ENCODE measurements at regions of chr1 and their contacts with region 1.

Region 1: DNA sequence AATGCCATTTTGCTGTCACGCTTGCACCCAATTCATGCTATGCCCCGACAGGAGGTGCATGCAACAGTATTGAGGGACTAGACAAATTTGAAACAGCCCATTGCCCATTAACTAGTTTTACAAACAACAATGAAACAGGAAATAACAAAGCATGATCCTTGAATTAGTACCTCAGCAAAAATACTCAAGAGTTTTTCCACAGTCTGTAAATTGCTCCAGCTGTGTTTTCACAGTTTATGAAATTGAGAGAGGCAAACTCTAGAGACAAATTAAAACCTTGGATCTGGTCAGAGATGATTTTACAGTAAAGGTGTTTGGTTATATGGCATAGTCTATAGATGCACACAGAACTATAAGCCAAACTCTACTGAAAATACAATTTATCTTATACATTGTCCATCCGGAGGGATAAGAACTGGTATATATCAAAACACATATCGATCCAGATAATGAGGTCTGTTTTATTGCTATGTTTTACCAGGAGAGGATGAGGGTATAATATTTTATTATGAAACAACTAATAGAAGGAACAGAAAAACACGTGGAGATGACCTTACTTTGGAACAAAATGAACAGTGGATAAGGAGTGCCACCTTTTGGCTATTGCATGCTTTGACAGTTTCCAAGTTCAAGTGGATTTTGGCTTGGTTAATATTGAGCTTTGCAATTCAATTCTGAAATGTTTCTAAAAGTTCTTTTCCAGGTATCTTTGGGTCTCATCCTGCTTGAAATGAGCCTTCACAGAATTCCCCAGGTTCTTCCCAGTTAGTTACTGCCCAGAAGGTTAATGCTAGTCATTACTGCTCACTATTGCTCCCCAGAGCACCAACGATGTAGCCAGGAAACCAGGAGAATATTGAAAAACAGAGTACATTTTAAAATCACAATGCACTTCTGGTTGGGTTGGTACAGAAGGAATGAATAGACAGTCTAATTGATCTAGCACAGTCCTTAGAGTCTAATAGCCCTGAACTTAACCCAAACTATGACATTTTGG is 45.7 kb downstream of the ZC3H11B start:
- DNase-seq: peak; percentile 87
- ATAC-seq: peak; percentile 69
- H3K4me3 ChIP-seq: no peak overlapping the region
- H3K27ac ChIP-seq: peak overlapping the region; percentile 34
- H3K4me1 ChIP-seq: peaks cover 29% of the 10 kb centered on the region
- H3K27me3 ChIP-seq: no peaks in the 10 kb centered on the region
- CTCF ChIP-seq: peak; percentile 99

Region 2: DNA sequence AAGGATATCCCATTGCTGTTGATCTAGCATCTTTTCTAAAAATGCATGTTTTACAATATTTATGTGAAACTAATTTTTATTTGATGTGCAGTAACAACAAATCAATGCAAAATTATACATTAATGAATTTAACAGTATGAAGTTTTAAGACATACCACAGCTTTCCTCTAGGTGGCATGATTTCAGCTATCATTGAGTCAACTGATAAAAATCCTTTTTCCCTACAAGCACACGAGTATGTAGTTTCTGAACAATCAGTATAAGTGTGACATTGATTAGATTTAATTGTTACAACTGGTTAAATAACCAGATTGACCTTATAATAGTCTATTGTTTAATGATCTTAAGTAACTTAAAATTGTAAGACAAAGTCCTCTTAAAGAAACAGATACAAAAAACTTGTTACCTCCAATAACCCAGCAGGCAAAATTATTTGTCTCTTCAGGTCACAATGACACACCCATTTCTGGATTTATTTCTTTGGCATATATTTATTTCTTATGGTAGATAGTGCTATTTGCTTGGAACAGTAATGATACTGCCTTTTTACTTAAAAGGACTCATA is 1227.9 kb before region 1 on chr1:
- CTCF ChIA-PET with region 1: interaction called, 3 read pairs
- POLR2A ChIA-PET with region 1: no interaction called
- intact Hi-C with region 1: loop called (anchors 2 kb)
- DNase-seq: peak; percentile 88
- ATAC-seq: peak; percentile 63
- H3K4me3 ChIP-seq: no peak overlapping the region
- H3K27ac ChIP-seq: peak overlapping the region; percentile 6
- H3K4me1 ChIP-seq: peaks cover 18% of the 10 kb centered on the region
- H3K27me3 ChIP-seq: no peaks in the 10 kb centered on the region
- CTCF ChIP-seq: peak; percentile 98

Region 3: DNA sequence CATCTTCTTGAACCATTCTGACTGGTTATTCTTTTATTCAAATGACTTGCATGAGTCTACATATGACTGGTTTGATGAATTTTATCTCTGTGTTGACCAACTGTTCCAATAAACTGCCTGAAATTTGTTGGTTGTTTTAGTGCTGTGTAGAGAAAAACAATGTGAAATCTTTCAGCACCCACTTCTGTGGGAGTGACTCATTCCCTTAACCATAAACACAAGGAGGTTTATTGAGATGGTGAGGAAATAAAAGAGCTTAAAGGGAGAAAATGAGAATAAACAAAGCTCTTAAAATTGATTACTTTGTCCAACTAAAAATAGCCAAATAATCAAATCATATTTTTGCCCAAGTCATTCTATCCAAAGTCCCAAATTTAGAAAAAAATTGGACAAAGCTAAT is 881.0 kb before region 1 on chr1:
- CTCF ChIA-PET with region 1: interaction called, 3 read pairs
- POLR2A ChIA-PET with region 1: no interaction called
- intact Hi-C with region 1: loop called (anchors 1 kb)
- DNase-seq: peak; percentile 82
- ATAC-seq: peak; percentile 84
- H3K4me3 ChIP-seq: no peak overlapping the region
- H3K27ac ChIP-seq: no peak overlapping the region
- H3K4me1 ChIP-seq: peaks cover 7% of the 10 kb centered on the region; the same call in 1 of the 2 replicates
- H3K27me3 ChIP-seq: no peaks in the 10 kb centered on the region
- CTCF ChIP-seq: no peak

Region 4: DNA sequence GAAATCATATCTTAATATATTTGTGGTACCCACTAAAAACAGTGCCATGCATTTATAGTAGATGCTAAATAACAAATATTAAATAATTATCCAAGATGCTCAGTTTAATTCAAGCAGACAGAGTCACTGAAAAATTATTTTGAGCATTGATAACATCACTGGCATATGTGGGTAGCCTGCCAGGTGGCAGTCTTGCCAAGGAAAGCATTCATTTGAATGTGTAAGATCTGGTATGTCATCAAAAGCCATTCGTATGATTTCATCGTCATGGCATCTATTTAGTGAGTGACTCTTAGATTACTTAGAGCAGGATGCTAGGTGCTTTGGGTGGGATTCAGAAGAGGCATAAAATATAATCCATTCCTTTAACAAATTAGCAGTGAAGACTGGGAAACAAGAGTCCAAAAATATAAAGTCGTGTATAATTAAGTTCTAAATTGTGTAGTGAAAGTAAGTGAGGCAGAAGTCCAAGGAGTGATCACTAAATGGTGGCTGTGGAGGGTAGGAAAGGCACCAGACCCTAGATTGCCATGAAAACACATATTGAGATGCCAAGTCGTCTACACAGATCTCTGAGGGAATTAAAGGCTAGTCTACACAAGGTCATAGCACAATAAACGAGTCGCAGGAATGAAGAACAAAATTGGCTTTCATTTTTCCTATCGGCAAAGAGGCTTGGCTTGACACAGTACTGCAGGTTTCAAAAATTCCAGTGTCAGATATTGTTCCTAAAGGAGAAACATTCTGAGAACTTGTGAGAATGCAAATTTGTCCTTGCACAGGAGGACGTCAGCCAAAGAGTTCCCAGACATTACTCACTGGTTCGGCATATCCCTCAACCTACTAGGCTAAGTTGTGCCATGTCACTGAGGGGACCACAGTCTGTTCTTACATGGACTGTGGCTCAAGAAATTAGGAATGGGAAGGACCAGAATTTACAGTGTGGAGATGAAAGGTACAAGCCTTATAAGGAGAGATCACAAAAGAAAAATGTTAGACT is 262.7 kb before region 1 on chr1:
- CTCF ChIA-PET with region 1: no interaction called
- POLR2A ChIA-PET with region 1: no interaction called
- intact Hi-C with region 1: loop called (anchors 1 kb)
- DNase-seq: peak; percentile 99
- ATAC-seq: peak; percentile 92
- H3K4me3 ChIP-seq: peak overlapping the region; percentile 13; the same call in 1 of the 2 replicates
- H3K27ac ChIP-seq: peak overlapping the region; percentile 25
- H3K4me1 ChIP-seq: peaks cover 21% of the 10 kb centered on the region
- H3K27me3 ChIP-seq: no peaks in the 10 kb centered on the region
- CTCF ChIP-seq: peak; percentile 89

Region 5: DNA sequence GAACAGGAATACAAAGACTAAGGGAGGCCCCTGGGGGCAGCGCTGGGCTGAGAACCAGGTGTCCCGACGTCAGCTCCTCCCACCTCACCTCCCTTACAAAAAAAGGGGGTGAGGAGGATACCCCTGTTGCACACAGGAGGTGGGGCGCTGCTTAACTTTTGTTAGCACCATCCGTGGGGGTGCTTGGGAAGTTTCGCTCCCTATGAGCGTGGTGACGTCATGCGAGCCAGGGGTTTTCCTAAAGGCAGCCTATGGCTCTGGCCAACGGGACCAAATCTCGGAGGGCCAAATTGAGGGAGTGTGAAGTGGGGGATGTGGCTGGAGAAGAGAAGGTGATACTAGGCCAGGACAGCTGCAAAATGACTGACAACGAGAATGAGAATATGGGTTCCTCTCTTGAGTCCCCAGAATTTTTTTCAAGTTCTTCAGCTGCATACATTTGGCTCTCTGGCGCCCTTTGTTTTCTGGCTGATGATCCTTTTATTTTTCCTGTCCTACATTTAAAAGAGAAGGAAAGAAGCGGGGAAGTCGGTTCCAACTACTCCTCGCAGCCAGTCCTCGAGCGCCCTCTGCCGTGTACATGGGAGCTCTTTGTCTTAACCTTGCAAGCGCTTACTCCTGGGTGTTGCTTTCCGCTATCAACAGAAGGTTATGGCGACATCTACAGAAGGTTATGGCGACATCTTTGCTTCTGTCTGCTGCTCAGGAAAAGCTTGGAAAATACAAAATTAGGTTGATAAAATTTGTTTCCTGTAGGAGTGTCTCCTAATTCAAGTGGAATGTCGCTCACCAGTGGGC is 93.6 kb after region 1 on chr1:
- CTCF ChIA-PET with region 1: interaction called, 7 read pairs
- POLR2A ChIA-PET with region 1: no interaction called
- intact Hi-C with region 1: loop called (anchors 1 kb)
- DNase-seq: peak; percentile 99
- ATAC-seq: peak; percentile 99
- H3K4me3 ChIP-seq: peak overlapping the region; percentile 16; the same call in 1 of the 2 replicates
- H3K27ac ChIP-seq: no peak overlapping the region
- H3K4me1 ChIP-seq: peaks cover 25% of the 10 kb centered on the region
- H3K27me3 ChIP-seq: no peaks in the 10 kb centered on the region
- CTCF ChIP-seq: peak; percentile 99

Measured in PC-3 (cell line).